Cardiac septum (tissue), 1 donor: ENCODE measurements at regions of chr2 and their contacts with region 1.

Region 1: DNA sequence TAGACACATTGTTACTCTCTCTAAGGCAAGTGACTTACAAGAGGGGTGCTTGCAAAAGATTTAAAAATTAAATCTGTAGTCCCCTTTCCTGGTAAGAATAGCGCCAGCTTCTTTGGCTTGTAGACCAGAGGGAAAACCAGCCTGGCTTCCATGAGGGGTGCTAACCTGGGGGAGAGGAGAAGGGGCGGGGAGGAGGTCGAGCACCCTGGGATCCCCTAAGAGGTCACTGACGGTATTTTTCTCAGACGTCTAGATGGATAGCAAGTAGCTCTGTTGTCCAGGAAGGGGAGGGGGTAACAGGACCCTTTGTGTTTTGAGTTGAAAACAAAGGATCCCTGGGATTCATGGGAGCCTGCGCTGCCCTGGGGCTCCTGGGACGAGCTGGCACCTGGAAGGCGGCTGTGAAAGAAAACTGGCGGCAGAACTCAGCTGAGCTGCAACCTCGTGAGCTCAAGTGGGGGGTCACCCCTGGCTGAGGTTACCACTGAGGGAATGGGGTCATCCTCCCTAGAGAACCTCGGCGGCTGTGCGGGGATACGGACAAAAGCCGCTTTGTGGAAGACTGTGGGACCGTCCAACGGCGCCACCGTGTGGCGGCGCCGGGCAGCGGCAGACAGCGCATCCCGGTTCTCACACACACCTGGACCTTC is 37.8 kb upstream of the MRPL19 start:
- DNase-seq: peak; percentile 82

Region 2: DNA sequence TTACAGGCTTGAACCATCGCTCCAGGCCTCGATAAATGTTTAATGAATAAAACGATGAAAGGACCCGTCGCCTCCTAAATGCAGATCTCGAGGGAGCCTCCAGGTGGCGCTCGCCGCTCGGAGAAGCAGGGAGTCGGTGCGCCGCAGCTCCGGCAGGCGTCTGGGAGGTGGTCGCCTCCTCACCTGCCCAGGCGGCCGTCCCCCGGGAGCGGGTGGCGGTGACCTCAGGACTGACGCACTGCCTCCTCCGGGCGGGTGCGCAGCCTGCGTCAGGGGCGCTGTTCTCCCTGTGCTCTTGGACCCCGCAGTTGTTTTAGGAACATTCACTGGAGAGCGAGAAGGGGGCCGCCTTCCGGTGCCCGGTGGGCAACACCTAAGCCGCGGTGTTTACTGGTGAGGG is 689.0 kb before region 1 on chr2:
- intact Hi-C with region 1: loop called (anchors 5 kb)
- DNase-seq: peak; percentile 87

Region 3: DNA sequence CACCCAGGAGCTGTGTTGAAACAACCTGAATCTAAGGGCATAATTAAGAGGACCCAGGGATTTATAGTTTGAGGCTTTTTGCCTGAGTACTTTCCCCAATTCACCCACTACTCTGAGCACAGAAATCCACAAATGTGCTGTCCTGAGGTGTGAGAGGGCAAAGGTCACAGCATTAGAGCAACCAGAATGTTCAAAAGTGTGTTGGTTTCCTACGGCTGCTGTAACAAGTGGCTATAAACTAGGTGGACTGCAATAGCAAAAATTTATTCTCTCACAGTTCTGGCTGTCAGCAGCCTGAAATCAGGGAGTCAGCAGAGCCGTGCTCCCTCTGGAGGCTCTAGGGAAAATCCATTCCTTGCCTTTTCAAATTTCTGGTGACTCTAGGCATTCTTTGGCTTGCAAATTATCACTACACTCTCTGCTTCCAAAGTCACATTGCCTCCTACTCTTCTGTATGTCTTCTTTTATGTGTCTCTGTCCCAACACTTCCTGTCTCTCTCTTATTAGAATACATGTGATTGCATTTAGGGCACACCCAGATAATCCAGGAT is 318.1 kb before region 1 on chr2:
- intact Hi-C with region 1: no loop called
- DNase-seq: no peak

Region 4: DNA sequence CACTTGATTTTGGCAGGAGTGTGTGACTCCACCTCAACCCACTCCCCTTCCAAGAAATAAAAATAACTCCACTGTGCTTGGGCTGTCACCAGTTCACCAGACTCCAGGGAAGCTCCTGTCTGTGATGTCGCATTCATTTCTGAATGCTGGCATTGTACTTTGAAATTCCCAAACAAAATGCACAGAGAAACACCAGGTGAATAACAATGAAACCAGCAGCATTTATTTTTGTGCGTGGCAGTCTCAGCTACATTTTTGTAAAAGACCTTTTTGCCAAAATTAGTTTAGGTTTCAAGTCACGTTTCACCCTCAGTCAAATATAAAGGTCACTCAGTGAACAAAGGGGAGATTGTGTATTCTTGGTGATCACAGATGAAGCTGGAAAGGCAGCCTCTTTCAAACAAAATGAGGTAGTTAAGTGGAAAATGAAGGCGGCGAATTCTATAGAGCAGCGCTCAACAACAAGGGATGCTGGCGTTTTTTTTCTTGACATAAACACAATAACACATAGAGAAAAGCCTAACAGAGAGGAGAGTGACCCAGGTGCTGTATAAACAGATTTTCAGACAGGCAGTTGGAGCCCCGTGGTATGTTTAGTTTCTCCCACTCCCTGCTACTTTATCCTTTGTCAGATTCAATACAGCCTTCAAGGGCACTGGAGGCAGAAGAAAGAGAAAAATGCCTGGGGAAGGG is 312.2 kb after region 1 on chr2:
- intact Hi-C with region 1: no loop called
- DNase-seq: no peak